Activated naive CD4-positive, alpha-beta T cell treated with anti-CD3 and anti-CD28 coated beads for 36 hours (primary cell): ENCODE measurements at regions of chr5 and their contacts with region 1.

Region 1: DNA sequence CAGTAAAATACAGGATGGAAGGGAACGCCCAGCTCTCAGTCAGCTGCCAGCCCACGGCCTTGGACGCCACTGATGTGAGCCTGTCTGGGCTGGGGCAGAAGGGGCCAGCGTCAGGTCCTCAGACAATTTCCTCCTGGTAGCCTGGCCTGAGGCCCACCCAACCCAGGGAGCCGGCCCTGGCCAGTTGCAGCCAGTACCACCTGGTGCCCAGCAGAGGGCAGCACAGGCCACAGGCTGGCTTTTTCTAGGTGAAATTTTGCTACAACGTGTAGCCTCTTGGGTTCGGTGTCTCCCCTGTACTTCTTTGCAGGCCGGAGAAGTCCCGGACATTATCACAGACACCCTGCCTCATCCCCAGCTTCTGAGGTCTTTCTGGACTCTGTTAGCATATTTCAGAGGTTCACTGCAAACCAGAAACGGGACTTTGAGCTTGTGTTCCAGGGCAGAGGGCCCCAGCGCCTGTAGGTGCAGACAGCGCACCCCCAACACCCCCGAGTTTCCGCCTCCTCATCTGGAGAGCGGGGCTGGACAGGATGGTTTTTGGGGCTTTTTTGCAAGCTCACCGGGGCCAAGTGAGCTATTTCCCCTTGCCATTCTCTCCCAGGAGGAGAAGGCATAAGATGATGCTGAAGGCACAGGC is 45.9 kb upstream of the KCNMB1 start:
- DNase-seq: peak; percentile 69
- H3K4me3 Mint-ChIP-seq: no peak overlapping the region
- H3K27ac Mint-ChIP-seq: no peak overlapping the region
- H3K4me1 Mint-ChIP-seq: no peaks in the 10 kb centered on the region
- H3K27me3 Mint-ChIP-seq: no peaks in the 10 kb centered on the region

Region 2: DNA sequence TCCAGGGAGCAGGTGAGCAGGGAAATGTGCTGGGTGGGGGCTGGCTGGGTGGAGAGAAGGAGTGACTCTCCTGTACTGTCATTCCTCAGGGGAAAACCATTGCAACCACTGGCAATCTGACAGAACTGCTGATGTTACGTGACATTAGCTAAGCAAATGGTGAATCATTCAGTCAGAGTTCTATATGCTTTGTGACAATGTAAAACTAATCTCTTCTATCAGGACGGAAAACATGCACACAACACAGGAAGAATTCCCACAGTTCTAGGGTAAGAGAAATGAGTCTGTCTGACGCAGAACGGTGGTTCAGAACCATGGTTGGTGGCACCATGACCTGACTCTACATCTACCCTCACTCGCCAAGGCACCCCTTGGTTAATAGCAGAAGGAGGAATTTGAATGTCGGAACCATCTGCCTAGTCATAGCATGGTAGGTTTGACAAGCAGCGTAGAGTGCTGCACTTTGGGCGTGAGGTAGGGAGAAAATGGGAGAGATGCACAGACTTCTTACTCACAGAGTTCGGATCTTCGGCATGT is 1612.3 kb before region 1 on chr5:
- CTCF ChIA-PET with region 1: no interaction called
- intact Hi-C with region 1: no loop called
- DNase-seq: peak; percentile 44
- H3K4me3 Mint-ChIP-seq: peak overlapping the region; percentile 7
- H3K27ac Mint-ChIP-seq: peak overlapping the region; percentile 34
- H3K4me1 Mint-ChIP-seq: peaks cover 21% of the 10 kb centered on the region
- H3K27me3 Mint-ChIP-seq: peaks cover 11% of the 10 kb centered on the region

Region 3: GRCh38 chr5:170597109-170597751 is 162.1 kb after region 1 on chr5:
- CTCF ChIA-PET with region 1: interaction called, 15 read pairs
- intact Hi-C with region 1: no loop called
- DNase-seq: peak; percentile 61
- H3K4me3 Mint-ChIP-seq: no peak overlapping the region
- H3K27ac Mint-ChIP-seq: no peak overlapping the region
- H3K4me1 Mint-ChIP-seq: peaks cover 21% of the 10 kb centered on the region
- H3K27me3 Mint-ChIP-seq: peaks cover 30% of the 10 kb centered on the region

Region 4: GRCh38 chr5:170623576-170624181 is 188.6 kb after region 1 on chr5:
- CTCF ChIA-PET with region 1: interaction called, 100 read pairs
- intact Hi-C with region 1: loop called (anchors 1 kb)
- DNase-seq: peak; percentile 58
- H3K4me3 Mint-ChIP-seq: no peak overlapping the region
- H3K27ac Mint-ChIP-seq: no peak overlapping the region
- H3K4me1 Mint-ChIP-seq: no peaks in the 10 kb centered on the region
- H3K27me3 Mint-ChIP-seq: no peaks in the 10 kb centered on the region

Region 5: GRCh38 chr5:170638454-170639220 is 203.6 kb after region 1 on chr5:
- CTCF ChIA-PET with region 1: interaction called, 110 read pairs
- intact Hi-C with region 1: loop called (anchors 1 kb)
- DNase-seq: peak; percentile 83
- H3K4me3 Mint-ChIP-seq: no peak overlapping the region
- H3K27ac Mint-ChIP-seq: no peak overlapping the region
- H3K4me1 Mint-ChIP-seq: peaks cover 9% of the 10 kb centered on the region
- H3K27me3 Mint-ChIP-seq: peaks cover 3% of the 10 kb centered on the region

Region 6: DNA sequence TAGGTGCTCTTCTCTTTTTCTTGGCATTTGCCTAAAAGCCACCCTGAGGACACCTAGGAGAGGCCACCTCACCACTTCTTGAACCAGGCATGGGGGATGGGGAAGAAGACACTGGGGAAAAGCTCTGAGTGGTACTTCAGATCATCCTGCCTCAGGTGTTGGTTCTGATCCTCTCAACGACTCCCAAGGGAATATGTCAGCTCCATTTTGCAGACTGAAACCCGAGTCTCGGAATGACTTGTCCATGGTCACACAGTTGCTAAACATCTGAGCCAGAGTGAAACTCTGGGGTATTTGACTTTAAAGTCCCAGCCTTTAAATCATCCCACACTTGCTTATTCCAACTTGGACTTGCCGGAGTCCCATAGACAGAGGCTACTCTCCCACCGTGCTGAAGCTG is 227.9 kb after region 1 on chr5:
- CTCF ChIA-PET with region 1: no interaction called
- intact Hi-C with region 1: no loop called
- DNase-seq: no peak
- H3K4me3 Mint-ChIP-seq: no peak overlapping the region
- H3K27ac Mint-ChIP-seq: no peak overlapping the region
- H3K4me1 Mint-ChIP-seq: no peaks in the 10 kb centered on the region
- H3K27me3 Mint-ChIP-seq: peaks cover 6% of the 10 kb centered on the region